PC-3 (cell line): ENCODE measurements at regions of chr17 and their contacts with region 1.

Region 1: GRCh38 chr17:35841505-35841904 is 27.2 kb downstream of the HEATR9 start:
- DNase-seq: no peak
- ATAC-seq: no peak
- H3K4me3 ChIP-seq: no peak overlapping the region
- H3K27ac ChIP-seq: no peak overlapping the region
- H3K4me1 ChIP-seq: no peaks in the 10 kb centered on the region
- H3K27me3 ChIP-seq: no peaks in the 10 kb centered on the region
- CTCF ChIP-seq: no peak

Region 2: DNA sequence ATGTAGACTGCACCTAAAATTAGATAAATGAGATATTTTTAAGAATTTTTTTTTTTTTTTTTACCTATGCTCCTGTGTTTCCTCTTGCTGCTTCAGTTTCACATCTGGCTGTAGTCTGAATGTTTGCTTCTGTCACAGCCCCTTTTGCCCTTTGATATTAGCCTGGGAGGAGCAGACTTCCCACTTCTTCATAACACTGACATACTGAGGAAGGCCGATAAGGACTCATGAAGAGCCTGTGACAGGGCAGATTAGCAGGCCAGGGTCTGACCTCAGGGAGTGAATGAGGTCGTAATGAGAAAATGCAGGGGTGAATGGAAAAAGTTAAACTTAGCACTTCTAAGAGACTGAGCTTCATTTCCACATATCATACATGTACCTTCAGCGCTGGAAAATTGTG is 280.8 kb before region 1 on chr17 and contains the start of gene SLFN14:
- CTCF ChIA-PET with region 1: no interaction called
- POLR2A ChIA-PET with region 1: no interaction called
- intact Hi-C with region 1: no loop called
- DNase-seq: no peak
- ATAC-seq: no peak
- H3K4me3 ChIP-seq: no peak within 1 kb of the TSS
- H3K27ac ChIP-seq: no peak within 1 kb of the TSS
- H3K4me1 ChIP-seq: no peaks in the 10 kb centered on the region
- H3K27me3 ChIP-seq: peaks cover 12% of the 10 kb centered on the region
- CTCF ChIP-seq: no peak
- total RNA-seq, gene SLFN14: not detected in 2 replicates

Region 3: DNA sequence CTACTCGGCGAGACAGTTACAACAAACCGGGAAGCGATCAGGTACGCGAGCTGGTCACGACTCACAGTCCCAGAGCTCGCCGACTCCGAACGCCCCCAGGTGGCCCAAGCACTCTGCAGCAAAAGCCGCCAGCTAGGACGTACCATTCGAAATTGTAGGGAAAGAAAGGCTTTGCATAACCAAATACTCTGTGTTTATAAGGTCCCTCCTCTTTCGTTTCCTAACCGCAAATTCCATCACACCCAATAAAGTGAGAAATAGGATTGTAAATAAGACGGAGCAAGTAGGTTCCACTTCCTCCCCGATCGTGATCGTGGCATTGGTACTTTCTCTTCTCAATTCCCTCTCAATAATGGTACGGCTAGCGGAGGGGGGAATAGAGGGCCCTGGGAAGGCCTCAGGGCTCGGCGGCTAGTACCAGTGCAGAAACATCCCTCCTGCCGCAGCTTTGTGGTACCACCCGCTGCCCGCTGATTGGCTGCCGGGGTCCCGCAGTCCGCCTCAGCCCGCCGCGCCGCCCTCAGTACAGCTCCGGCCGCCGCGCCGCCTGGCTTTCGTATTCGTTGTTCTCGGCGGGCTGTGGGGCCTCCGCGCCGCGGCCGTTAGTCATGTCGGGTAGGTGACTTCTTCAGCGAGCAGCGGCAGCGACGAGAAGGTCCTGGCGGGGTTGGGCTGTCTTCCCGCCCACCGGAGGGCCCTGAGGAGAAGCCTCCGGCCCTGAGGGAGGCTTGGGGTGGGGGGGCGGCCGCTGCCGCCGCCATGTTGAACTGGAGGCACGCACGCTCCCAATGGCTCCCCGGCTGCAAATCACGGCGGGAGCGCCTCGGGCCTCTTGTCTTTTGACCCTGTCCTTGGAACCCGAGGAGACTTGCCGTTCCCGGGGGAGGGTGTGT is 32.3 kb before region 1 on chr17 and contains the start of gene TAF15:
- CTCF ChIA-PET with region 1: interaction called, 21 read pairs
- POLR2A ChIA-PET with region 1: no interaction called
- intact Hi-C with region 1: no loop called
- DNase-seq: peak; percentile 94
- ATAC-seq: peak; percentile 90
- H3K4me3 ChIP-seq: peak within 1 kb of the TSS; percentile 97
- H3K27ac ChIP-seq: peak within 1 kb of the TSS; percentile 88
- H3K4me1 ChIP-seq: peaks cover 31% of the 10 kb centered on the region
- H3K27me3 ChIP-seq: no peaks in the 10 kb centered on the region
- CTCF ChIP-seq: peak; percentile 78
- total RNA-seq, gene TAF15: 32.4 and 48.1 TPM in 2 replicates